ENCODE measurements at regions of chr18 and their contacts with region 1.

Region 1: GRCh38 chr18:76803814-76804213 is 18.5 kb upstream of the ZNF236 start:
- DNase-seq: peak; percentile 76
- H3K4me3 Mint-ChIP-seq: no peak overlapping the region
- H3K27ac Mint-ChIP-seq: no peak overlapping the region
- H3K4me1 Mint-ChIP-seq: peaks cover 18% of the 10 kb centered on the region
- H3K27me3 Mint-ChIP-seq: peaks cover 10% of the 10 kb centered on the region

Region 2: GRCh38 chr18:76721207-76721996 is 82.4 kb before region 1 on chr18:
- CTCF ChIA-PET with region 1: interaction called, 45 read pairs
- POLR2A ChIA-PET with region 1: interaction called, 8 read pairs
- DNase-seq: peak; percentile 83
- H3K4me3 Mint-ChIP-seq: peak overlapping the region; percentile 66
- H3K27ac Mint-ChIP-seq: peak overlapping the region; percentile 98
- H3K4me1 Mint-ChIP-seq: peaks cover 63% of the 10 kb centered on the region
- H3K27me3 Mint-ChIP-seq: no peaks in the 10 kb centered on the region

Region 3: GRCh38 chr18:76821875-76822509 is 18.2 kb after region 1 on chr18:
- CTCF ChIA-PET with region 1: interaction called, 79 read pairs
- POLR2A ChIA-PET with region 1: interaction called, 7 read pairs
- DNase-seq: peak; percentile 66
- H3K4me3 Mint-ChIP-seq: peak overlapping the region; percentile 72
- H3K27ac Mint-ChIP-seq: peak overlapping the region; percentile 86
- H3K4me1 Mint-ChIP-seq: peaks cover 48% of the 10 kb centered on the region
- H3K27me3 Mint-ChIP-seq: no peaks in the 10 kb centered on the region

Region 4: GRCh38 chr18:76922107-76922506 is 118.3 kb after region 1 on chr18:
- CTCF ChIA-PET with region 1: interaction called, 17 read pairs
- POLR2A ChIA-PET with region 1: no interaction called
- DNase-seq: peak; percentile 62
- H3K4me3 Mint-ChIP-seq: no peak overlapping the region
- H3K27ac Mint-ChIP-seq: no peak overlapping the region
- H3K4me1 Mint-ChIP-seq: peaks cover 15% of the 10 kb centered on the region
- H3K27me3 Mint-ChIP-seq: no peaks in the 10 kb centered on the region

Measured in activated CD4-positive, alpha-beta memory T cell treated with anti-CD3 and anti-CD28 coated beads, Interleukin-2, amount 10 ng/mL, durations not matched to agents 7 days and 5 days (primary cell).